KBM-7 (cell line): ENCODE measurements at regions of chr9 and their contacts with region 1.

Region 1: GRCh38 chr9:88280816-88281382 is 107.3 kb upstream of the SPIN1 start:
- DNase-seq: peak; percentile 53

Region 2: GRCh38 chr9:88388172-88388885 is 107.4 kb after region 1 on chr9 and contains the start of gene SPIN1:
- in situ Hi-C with region 1: loop called (anchors 25 kb)
- DNase-seq: peak; percentile 32